Activated CD4-positive, alpha-beta T cell treated with anti-CD3 and anti-CD28 coated beads, Interleukin-2, amount 10 ng/mL, durations not matched to agents 24 days and 14 days (primary cell): ENCODE measurements at regions of chr6 and their contacts with region 1.

Region 1: DNA sequence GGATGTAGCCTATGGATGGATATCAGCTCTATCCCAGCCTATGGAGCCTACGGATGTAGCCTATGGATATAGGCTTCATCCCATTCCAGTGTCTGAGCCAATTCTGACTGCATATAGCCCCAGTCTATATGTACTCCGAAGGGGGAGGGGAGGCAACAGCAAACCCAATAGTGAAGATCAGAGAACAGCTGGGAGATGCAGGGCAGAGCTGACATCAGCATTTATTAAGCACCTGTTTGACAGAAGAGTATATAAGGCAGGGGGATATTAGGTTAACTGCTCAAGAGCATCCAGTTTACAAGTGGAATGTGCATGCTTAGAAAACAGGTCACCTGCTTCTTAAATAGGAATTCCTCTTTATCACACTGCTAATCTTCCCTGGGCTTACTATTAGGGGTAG is 85.2 kb downstream of the TNFAIP3 start:
- DNase-seq: no peak
- H3K4me3 Mint-ChIP-seq: no peak overlapping the region
- H3K27ac Mint-ChIP-seq: no peak overlapping the region
- H3K4me1 Mint-ChIP-seq: peaks cover 14% of the 10 kb centered on the region
- H3K27me3 Mint-ChIP-seq: no peaks in the 10 kb centered on the region

Region 2: GRCh38 chr6:137967689-137968454 is 15.6 kb after region 1 on chr6:
- intact Hi-C with region 1: loop called (anchors 2 kb)
- DNase-seq: peak; percentile 58
- H3K4me3 Mint-ChIP-seq: peak overlapping the region; percentile 22
- H3K27ac Mint-ChIP-seq: peak overlapping the region; percentile 76
- H3K4me1 Mint-ChIP-seq: peaks cover 51% of the 10 kb centered on the region
- H3K27me3 Mint-ChIP-seq: no peaks in the 10 kb centered on the region

Region 3: GRCh38 chr6:137995371-137995770 is 43.1 kb after region 1 on chr6:
- intact Hi-C with region 1: no loop called
- DNase-seq: no peak
- H3K4me3 Mint-ChIP-seq: no peak overlapping the region
- H3K27ac Mint-ChIP-seq: no peak overlapping the region
- H3K4me1 Mint-ChIP-seq: peaks cover 2% of the 10 kb centered on the region
- H3K27me3 Mint-ChIP-seq: peaks cover 26% of the 10 kb centered on the region

Region 4: DNA sequence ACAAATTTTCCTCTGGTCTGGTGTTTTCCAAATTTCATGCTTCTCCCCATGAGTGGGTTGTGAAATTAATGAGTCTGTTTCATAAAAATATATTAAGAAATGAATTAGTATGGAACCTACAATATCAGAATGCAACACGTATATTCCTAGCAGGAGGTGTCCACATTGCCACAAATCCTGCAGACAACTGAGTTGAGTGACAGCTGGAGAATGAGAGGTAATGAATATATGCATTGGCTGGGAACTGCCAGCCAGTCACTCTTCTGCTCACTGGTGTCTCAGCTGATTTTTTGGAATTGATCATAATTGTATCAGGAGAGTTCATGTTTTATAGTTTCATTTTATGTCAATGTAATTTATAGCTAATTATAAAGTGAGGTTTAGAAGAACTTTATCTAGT is 203.2 kb after region 1 on chr6:
- intact Hi-C with region 1: no loop called
- DNase-seq: no peak
- H3K4me3 Mint-ChIP-seq: no peak overlapping the region
- H3K27ac Mint-ChIP-seq: no peak overlapping the region
- H3K4me1 Mint-ChIP-seq: no peaks in the 10 kb centered on the region
- H3K27me3 Mint-ChIP-seq: peaks cover 49% of the 10 kb centered on the region